AG04449 (cell line): ENCODE measurements at regions of chr6 and their contacts with region 1.

Region 1: GRCh38 chr6:43506667-43507471 is 3.3 kb downstream of the LRRC73 start:
- DNase-seq: peak; percentile 33
- H3K4me3 ChIP-seq: no peak overlapping the region
- CTCF ChIP-seq: peak; percentile 92

Region 2: DNA sequence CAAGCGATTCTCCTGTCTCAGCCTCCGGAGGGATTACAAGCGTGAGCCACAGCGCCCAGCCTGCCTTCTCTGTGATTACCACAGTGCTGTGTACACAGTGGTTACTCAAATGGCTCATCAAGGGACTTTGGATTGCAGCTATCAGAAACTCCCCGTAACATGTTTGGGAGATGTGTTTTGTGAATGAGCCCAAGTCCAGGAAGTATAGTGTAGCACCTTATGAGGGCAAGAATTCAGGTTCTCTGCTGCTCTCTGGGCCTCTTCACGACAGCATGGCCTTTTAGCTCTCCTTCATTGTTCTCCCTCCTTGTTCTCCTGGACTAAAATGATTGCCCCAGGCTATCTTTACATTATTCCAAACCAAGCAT is 661.6 kb before region 1 on chr6:
- CTCF ChIA-PET with region 1: no interaction called
- POLR2A ChIA-PET with region 1: no interaction called
- DNase-seq: no peak
- H3K4me3 ChIP-seq: no peak overlapping the region
- CTCF ChIP-seq: no peak

Region 3: GRCh38 chr6:43228951-43229802 is 277.7 kb before region 1 on chr6 and contains the start of gene DNPH1:
- CTCF ChIA-PET with region 1: interaction called, 28 read pairs
- POLR2A ChIA-PET with region 1: no interaction called
- DNase-seq: no peak
- H3K4me3 ChIP-seq: peak within 1 kb of the TSS; percentile 70
- CTCF ChIP-seq: peak; percentile 62

Region 4: GRCh38 chr6:43369174-43370022 is 137.5 kb before region 1 on chr6 and contains the start of gene ZNF318:
- CTCF ChIA-PET with region 1: interaction called, 14 read pairs
- POLR2A ChIA-PET with region 1: interaction called, 5 read pairs
- DNase-seq: peak; percentile 71
- H3K4me3 ChIP-seq: peak within 1 kb of the TSS; percentile 74
- CTCF ChIP-seq: no peak

Region 5: GRCh38 chr6:43436577-43437282 is 70.1 kb before region 1 on chr6:
- CTCF ChIA-PET with region 1: interaction called, 28 read pairs
- POLR2A ChIA-PET with region 1: no interaction called
- DNase-seq: peak; percentile 23
- H3K4me3 ChIP-seq: no peak overlapping the region
- CTCF ChIP-seq: no peak

Region 6: DNA sequence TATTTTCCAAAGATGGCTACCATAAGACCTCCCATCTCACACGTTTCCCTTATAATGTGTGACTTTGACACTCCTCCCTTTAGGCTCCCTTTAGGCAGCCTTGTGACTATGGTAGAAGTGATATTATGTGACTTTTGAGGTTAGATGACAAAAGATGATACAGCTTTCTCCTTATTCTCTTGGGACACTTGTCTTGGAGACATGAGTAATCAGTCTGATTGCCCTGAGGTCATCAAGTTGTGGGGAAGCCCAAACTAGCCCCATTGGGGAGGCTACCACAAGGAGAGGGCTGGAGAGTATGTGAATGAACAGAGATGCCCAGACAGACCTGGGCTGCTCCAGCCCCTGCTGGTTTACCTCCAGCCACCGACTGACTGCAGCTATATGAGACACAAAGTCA is 40.9 kb before region 1 on chr6:
- CTCF ChIA-PET with region 1: interaction called, 18 read pairs
- POLR2A ChIA-PET with region 1: no interaction called
- DNase-seq: no peak
- H3K4me3 ChIP-seq: no peak overlapping the region
- CTCF ChIP-seq: no peak

Region 7: GRCh38 chr6:43496370-43497128 is 10.3 kb before region 1 on chr6:
- CTCF ChIA-PET with region 1: interaction called, 337 read pairs
- POLR2A ChIA-PET with region 1: interaction called, 4 read pairs
- DNase-seq: no peak
- H3K4me3 ChIP-seq: no peak overlapping the region
- CTCF ChIP-seq: peak; percentile 67

Region 8: GRCh38 chr6:43758617-43759050 is 251.8 kb after region 1 on chr6:
- CTCF ChIA-PET with region 1: no interaction called
- POLR2A ChIA-PET with region 1: no interaction called
- DNase-seq: no peak
- H3K4me3 ChIP-seq: no peak overlapping the region
- CTCF ChIP-seq: peak; percentile 65

Region 9: DNA sequence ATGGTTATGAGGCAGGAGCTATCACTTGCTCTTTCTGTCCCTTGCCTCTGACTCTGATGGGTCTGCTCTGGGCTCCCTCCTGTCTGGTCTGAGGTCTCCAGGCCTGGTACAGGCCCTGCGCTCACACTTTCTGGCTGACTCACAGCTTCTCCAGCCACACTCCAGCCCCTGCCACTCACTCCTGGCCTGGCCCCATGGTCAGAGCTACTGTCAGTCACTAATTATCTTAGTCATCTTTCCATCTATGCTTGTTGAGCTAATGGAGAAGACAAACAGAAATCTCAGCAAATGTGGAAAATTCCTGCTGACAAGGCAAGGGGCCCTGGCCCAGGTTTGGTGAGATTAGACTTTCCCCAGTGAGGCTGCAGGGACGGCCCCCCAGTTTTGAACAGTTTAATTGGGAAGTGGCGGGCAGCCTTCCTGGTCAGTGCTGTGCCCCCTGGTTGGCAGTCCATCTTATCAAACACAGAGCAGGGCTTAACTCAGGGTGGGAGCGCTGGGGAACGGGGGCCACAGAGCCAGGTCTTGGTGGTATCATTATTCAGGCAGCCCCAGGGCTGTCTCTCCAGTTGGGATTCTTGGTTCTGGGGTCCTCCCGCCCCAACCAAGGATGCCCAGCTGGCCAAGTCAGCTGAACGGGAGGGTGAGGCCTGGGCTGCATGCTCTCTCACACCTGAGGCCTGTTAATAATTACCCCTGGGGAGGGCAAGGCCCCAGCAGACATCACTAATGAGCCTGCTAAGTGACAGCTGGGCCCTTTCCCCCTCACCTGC is 326.5 kb after region 1 on chr6:
- CTCF ChIA-PET with region 1: no interaction called
- POLR2A ChIA-PET with region 1: no interaction called
- DNase-seq: no peak
- H3K4me3 ChIP-seq: no peak overlapping the region
- CTCF ChIP-seq: no peak